Activated CD4-positive, alpha-beta memory T cell treated with anti-CD3 and anti-CD28 coated beads for 36 hours (primary cell): ENCODE measurements at regions of chr2 and their contacts with region 1.

Region 1: GRCh38 chr2:30862054-30862651 is 54.9 kb upstream of the CAPN13 start:
- DNase-seq: peak; percentile 45
- H3K4me3 Mint-ChIP-seq: no peak overlapping the region
- H3K27ac Mint-ChIP-seq: no peak overlapping the region
- H3K4me1 Mint-ChIP-seq: peaks cover 8% of the 10 kb centered on the region
- H3K27me3 Mint-ChIP-seq: peaks cover 3% of the 10 kb centered on the region

Region 2: GRCh38 chr2:30584116-30584515 is 278.0 kb before region 1 on chr2:
- CTCF ChIA-PET with region 1: no interaction called
- POLR2A ChIA-PET with region 1: no interaction called
- intact Hi-C with region 1: no loop called
- DNase-seq: no peak
- H3K4me3 Mint-ChIP-seq: no peak overlapping the region
- H3K27ac Mint-ChIP-seq: no peak overlapping the region
- H3K4me1 Mint-ChIP-seq: peaks cover 3% of the 10 kb centered on the region
- H3K27me3 Mint-ChIP-seq: no peaks in the 10 kb centered on the region

Region 3: DNA sequence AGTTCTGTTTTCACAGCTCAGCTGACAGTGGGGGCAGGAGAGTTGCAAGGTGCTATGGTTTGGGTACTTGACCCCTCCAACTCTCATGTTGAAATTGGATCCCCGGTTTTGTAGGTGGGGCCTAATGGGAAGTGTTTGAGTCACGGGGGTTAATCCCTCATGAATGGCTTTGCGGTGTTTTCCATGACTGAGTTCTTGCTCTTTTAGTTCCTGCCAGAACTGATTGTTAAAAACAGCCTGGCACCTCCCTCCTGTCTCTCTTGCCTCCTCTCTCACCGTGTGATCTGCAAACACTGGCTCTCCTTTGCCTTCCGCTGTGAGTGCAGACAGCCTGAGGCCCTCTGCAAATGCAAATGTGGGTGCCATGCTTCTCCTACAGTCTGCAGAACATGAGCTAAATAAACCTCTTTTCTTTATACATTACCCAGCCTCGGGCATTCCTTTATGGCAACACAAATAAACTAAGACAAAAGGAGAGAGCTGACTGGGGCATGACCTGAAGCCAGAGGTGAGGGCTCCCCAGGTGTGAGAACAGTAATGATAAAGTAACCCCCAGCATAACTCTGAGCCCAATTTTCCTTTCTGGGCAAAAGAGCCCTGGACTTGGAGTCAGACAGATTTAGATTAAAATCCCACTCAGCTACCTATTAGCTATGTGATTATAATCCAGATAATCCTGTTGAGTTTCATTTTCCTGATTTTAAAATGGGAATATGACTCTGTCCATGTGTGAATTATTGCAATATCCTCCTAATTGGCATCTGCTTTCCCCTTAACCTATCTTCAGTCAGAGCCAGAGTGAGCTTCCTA is 10.0 kb after region 1 on chr2:
- CTCF ChIA-PET with region 1: no interaction called
- POLR2A ChIA-PET with region 1: no interaction called
- intact Hi-C with region 1: no loop called
- DNase-seq: no peak
- H3K4me3 Mint-ChIP-seq: no peak overlapping the region
- H3K27ac Mint-ChIP-seq: no peak overlapping the region
- H3K4me1 Mint-ChIP-seq: no peaks in the 10 kb centered on the region
- H3K27me3 Mint-ChIP-seq: peaks cover 16% of the 10 kb centered on the region

Region 4: GRCh38 chr2:31170071-31170698 is 308.0 kb after region 1 on chr2:
- CTCF ChIA-PET with region 1: interaction called, 22 read pairs
- POLR2A ChIA-PET with region 1: no interaction called
- intact Hi-C with region 1: loop called (anchors 2 kb)
- DNase-seq: peak; percentile 67
- H3K4me3 Mint-ChIP-seq: no peak overlapping the region
- H3K27ac Mint-ChIP-seq: no peak overlapping the region
- H3K4me1 Mint-ChIP-seq: no peaks in the 10 kb centered on the region
- H3K27me3 Mint-ChIP-seq: no peaks in the 10 kb centered on the region